Left cardiac atrium (tissue), 4 donors: ENCODE measurements at regions of chr7 and their contacts with region 1.

Region 1: GRCh38 chr7:101688183-101688831 is 59.2 kb upstream of the MYL10 start:
- DNase-seq: peak; percentile 85
- ATAC-seq: peak; percentile 92 to 93

Region 2: DNA sequence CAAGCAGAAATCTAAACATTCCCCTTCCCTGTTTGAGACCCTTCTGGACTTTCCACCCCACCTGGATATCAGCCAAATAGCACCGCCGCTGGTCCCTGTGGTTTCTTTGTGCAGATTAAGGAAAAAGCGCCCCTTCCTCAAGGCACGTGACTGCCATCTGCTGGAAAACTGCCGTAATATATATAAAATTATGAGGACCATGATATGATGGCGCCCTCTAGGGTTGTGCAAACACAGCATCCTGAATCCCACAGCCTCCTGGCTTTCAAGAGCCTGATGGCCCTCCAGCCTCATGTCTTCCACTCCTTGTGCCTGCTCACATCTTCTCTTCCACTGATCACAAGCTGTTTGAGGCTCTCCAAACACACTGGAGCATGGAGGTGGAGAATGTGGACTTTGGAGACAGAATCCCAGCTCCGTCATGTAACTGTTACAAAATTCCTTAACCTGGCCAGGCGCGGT is 180.5 kb before region 1 on chr7:
- intact Hi-C with region 1: no loop called
- DNase-seq: no peak
- ATAC-seq: no peak

Region 3: DNA sequence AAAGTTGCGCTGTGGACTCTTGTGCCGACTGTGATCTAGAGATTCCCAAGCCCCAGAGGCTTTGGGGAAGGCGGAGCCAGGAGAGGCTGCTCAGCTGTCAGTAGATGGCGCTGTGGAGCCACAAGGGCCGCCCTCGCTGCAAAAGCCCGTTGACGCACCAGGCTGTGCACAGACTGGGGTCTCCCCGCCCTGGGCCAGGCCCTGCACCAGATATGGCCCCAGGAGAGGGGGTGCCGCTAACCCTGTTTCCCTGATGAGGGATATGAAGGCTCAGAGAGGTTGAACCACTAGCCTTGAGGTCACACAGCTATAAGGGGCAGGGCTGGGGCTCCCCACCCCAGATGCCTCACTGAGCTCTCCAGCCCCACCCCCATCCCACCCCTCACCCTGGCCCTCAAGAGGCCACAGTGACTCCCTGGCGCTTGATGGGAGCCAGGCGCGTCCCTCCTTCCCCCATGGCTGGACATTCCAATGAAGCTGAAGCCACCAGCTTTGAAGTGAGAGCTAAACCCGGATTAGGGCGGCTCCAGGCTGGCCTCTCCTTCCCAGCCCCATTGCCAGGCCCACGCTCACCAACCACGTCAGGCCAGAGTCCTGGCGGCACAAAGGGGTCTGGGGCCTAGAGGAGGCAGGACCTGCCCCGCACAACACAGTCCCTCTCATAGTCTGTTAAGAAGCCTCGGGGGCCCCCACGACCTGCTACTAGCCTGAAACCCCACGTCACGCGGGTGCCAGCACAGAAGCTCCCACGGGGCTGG is 85.6 kb before region 1 on chr7:
- intact Hi-C with region 1: loop called in 1 of 2 experiments (anchors 5 kb)
- DNase-seq: peak; percentile 83
- ATAC-seq: peak; percentile 87 to 94

Region 4: DNA sequence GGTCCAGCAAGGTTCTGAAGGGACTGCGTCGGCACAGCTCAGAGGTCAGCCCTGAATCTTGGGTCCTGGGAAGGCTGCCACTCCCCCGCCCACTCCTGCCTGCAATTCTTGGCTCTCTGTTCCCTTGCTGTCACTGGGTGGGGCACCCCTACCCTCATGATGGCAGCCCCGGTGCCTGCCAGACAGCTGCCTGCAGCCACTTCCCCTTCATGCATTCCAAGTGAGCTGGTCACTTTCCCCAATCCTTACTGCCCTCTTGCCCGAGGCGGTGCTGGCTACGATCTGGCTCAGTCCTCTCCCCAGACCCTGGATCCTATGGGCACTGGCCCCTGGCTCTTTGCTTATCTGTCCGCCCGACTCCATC is 73.4 kb before region 1 on chr7:
- intact Hi-C with region 1: no loop called
- DNase-seq: no peak
- ATAC-seq: peak in 1 of 2 donors; percentile 50

Region 5: GRCh38 chr7:101804967-101805366 is 116.7 kb after region 1 on chr7:
- intact Hi-C with region 1: loop called in 1 of 2 experiments (anchors 10 kb)
- DNase-seq: no peak
- ATAC-seq: no peak

Region 6: DNA sequence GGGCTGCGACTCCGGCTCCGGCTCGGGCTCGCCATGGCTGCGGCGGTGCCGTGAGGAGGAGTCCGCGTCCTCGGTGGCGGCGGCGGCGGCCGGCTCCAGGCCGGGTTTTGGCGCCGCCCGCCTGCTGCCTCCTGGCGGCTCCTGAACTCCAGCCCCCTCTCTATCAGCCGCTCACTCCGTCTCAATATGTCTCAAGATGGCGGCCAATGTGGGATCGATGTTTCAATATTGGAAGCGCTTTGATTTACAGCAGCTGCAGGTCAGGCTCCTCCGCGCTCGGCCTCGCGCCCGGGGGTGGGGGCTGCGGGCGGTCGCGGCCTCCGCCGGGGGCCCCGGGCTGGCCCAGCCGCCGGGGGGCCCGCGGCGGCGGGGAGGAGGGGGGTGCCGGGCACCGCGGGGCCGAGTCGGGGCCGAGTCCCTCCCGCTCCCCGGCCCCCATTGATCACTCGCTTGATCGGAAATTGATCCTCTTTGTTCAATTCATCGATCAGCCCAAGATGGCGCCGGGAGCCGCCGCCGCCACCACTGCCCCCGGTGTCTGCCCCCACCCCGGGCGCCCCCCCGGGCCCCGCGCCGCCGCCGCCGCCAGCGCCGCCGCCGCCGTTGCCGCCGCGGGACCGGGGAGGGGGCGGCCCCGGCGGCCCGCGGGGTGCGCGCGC is 127.7 kb after region 1 on chr7:
- intact Hi-C with region 1: loop called in 1 of 2 experiments (anchors 2 kb)
- DNase-seq: peak; percentile 80
- ATAC-seq: peak; percentile 71 to 82

Region 7: GRCh38 chr7:102236592-102237287 is 548.4 kb after region 1 on chr7:
- intact Hi-C with region 1: loop called (anchors 2 to 10 kb)
- DNase-seq: peak; percentile 61
- ATAC-seq: peak; percentile 87 to 88

Region 8: GRCh38 chr7:102279537-102280400 is 591.5 kb after region 1 on chr7:
- intact Hi-C with region 1: loop called in 1 of 2 experiments (anchors 10 kb)
- DNase-seq: peak; percentile 55
- ATAC-seq: peak; percentile 80 to 89